Upper lobe of right lung (tissue), 1 donor: ENCODE measurements at regions of chr9 and their contacts with region 1.

Region 1: GRCh38 chr9:69421908-69422801 is 97.1 kb downstream of the ENTREP1 start:
- DNase-seq: no peak
- ATAC-seq: peak; percentile 90
- H3K4me3 ChIP-seq: no peak overlapping the region
- H3K27ac ChIP-seq: no peak overlapping the region
- H3K4me1 ChIP-seq: no peaks in the 10 kb centered on the region
- H3K27me3 ChIP-seq: no peaks in the 10 kb centered on the region
- CTCF ChIP-seq: peak; percentile 77

Region 2: GRCh38 chr9:69199769-69200470 is 222.2 kb before region 1 on chr9:
- intact Hi-C with region 1: no loop called
- DNase-seq: no peak
- ATAC-seq: peak; percentile 63
- H3K4me3 ChIP-seq: no peak overlapping the region
- H3K27ac ChIP-seq: no peak overlapping the region
- H3K4me1 ChIP-seq: peaks cover 25% of the 10 kb centered on the region
- H3K27me3 ChIP-seq: no peaks in the 10 kb centered on the region
- CTCF ChIP-seq: no peak

Region 3: GRCh38 chr9:69279084-69279729 is 142.9 kb before region 1 on chr9:
- intact Hi-C with region 1: no loop called
- DNase-seq: no peak
- ATAC-seq: no peak
- H3K4me3 ChIP-seq: no peak overlapping the region
- H3K27ac ChIP-seq: no peak overlapping the region
- H3K4me1 ChIP-seq: no peaks in the 10 kb centered on the region
- H3K27me3 ChIP-seq: no peaks in the 10 kb centered on the region
- CTCF ChIP-seq: no peak

Region 4: GRCh38 chr9:69549310-69550202 is 127.4 kb after region 1 on chr9:
- intact Hi-C with region 1: loop called (anchors 5 kb)
- DNase-seq: no peak
- ATAC-seq: peak; percentile 84
- H3K4me3 ChIP-seq: no peak overlapping the region
- H3K27ac ChIP-seq: no peak overlapping the region
- H3K4me1 ChIP-seq: no peaks in the 10 kb centered on the region
- H3K27me3 ChIP-seq: no peaks in the 10 kb centered on the region
- CTCF ChIP-seq: peak; percentile 85

Region 5: GRCh38 chr9:69599232-69599971 is 177.2 kb after region 1 on chr9:
- intact Hi-C with region 1: no loop called
- DNase-seq: no peak
- ATAC-seq: peak; percentile 92
- H3K4me3 ChIP-seq: no peak overlapping the region
- H3K27ac ChIP-seq: no peak overlapping the region
- H3K4me1 ChIP-seq: no peaks in the 10 kb centered on the region
- H3K27me3 ChIP-seq: no peaks in the 10 kb centered on the region
- CTCF ChIP-seq: no peak